Activated CD4-positive, alpha-beta T cell treated with anti-CD3 and anti-CD28 coated beads for 36 hours (primary cell): ENCODE measurements at regions of chr3 and their contacts with region 1.

Region 1: DNA sequence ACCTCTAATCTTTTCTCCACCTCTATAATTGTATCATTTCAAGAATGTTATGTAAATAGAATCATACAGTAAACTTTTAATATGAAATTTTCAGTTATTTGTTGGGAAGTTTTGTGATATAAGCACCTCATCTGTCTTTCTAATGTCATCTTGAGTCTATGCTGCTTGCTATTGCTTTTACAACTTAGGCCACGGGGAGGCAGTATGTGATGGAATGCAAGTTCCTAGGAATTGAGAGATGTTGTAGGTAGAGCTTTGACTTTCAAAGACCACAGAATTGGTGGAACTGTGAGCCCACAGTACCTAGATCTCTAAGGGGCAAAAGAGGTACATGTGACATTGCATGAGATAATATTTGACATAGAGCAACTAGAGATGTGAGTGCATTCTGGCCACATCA is 328.3 kb downstream of the MFSD1 start:
- DNase-seq: peak; percentile 15
- ATAC-seq: no peak
- H3K4me3 Mint-ChIP-seq: no peak overlapping the region
- H3K27ac Mint-ChIP-seq: no peak overlapping the region
- H3K4me1 Mint-ChIP-seq: no peaks in the 10 kb centered on the region
- H3K27me3 Mint-ChIP-seq: peaks cover 3% of the 10 kb centered on the region

Region 2: DNA sequence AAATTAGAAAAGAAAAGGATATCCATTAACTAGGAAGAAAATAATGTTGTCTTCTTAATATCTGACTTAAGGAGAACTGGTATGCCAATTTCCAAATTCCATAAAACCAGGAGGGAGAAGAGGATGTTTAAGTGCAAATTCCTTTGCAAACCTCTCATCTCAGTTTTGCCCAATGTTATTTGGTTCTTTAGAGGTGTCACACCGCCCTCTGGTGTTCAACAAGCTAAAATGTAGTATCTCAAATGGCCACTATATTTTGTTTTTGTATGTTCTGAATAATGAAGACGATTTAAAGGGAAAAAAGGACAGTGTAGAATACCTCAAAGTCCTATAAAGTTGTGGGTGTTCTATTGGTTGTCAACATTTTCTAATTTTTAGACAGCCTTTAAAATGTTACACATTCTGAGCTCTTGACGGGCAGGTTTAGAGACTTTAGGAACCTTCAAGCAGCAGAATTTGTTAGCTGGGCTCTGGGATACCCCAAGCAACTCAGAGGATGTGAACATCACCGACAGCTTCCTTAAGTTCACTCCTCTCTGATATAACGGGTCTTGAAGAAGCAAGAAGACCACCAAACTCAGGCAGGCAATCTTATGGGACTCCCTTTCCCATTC is 130.0 kb after region 1 on chr3:
- CTCF ChIA-PET with region 1: no interaction called
- POLR2A ChIA-PET with region 1: no interaction called
- intact Hi-C with region 1: loop called in 1 of 2 experiments (anchors 5 kb)
- DNase-seq: peak; percentile 56
- ATAC-seq: no peak
- H3K4me3 Mint-ChIP-seq: no peak overlapping the region
- H3K27ac Mint-ChIP-seq: no peak overlapping the region
- H3K4me1 Mint-ChIP-seq: no peaks in the 10 kb centered on the region
- H3K27me3 Mint-ChIP-seq: peaks cover 3% of the 10 kb centered on the region